H1 (cell line): ENCODE measurements at regions of chr17 and their contacts with region 1.

Region 1: DNA sequence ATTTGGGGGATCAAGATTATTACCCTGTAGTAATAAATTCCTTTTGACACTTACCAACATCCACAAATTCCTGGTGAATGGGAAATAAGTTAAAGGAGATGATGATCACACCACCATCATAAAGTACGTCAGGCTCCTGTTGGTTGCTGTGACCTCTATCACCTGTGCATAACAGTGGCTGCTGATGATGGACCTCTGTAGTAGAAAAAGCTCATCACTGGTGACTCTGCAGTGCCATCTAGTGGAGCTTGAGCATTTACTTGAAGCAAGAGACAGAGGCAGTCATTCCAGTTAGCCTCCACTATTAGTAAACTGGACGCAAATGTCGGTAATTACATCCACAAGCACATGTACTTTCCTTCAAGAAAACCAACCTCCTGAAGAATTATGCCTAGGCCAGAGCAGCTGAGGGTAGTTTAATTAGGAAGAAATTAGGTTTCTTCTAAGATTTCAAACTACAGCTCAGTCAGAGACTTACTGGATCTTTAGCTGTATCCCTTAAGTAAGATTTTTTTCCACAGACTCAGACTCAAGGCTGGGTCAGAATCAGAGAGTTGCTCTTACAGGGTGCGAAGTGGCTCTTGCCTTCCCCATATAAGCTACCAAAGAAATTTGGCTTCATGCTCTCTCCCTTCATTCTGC is 39.3 kb downstream of the CYB561 start:
- DNase-seq: peak; percentile 15 to 67
- H3K4me3 ChIP-seq: no peak overlapping the region
- H3K27ac ChIP-seq: no peak overlapping the region
- H3K4me1 ChIP-seq: no peaks in the 10 kb centered on the region
- H3K27me3 ChIP-seq: no peaks in the 10 kb centered on the region
- CTCF ChIP-seq: peak in 2 of 3 experiments; percentile 85 to 91; a peak in 3 of 4 replicates
- EP300 ChIP-seq: no peak
- POLR2A ChIP-seq: no peak
- RAD21 ChIP-seq: peak; percentile 90 to 93

Region 2: GRCh38 chr17:62995377-62995885 is 411.4 kb before region 1 on chr17:
- CTCF ChIA-PET with region 1: interaction called, 23 read pairs
- POLR2A ChIA-PET with region 1: interaction called, 3 read pairs
- DNase-seq: no peak
- H3K4me3 ChIP-seq: no peak overlapping the region
- H3K27ac ChIP-seq: no peak overlapping the region
- H3K4me1 ChIP-seq: no peaks in the 10 kb centered on the region
- H3K27me3 ChIP-seq: no peaks in the 10 kb centered on the region
- CTCF ChIP-seq: peak; percentile 56 to 81 (median 70)
- EP300 ChIP-seq: no peak
- POLR2A ChIP-seq: no peak
- RAD21 ChIP-seq: peak; percentile 71 to 75

Region 3: GRCh38 chr17:63082273-63082993 is 324.4 kb before region 1 on chr17:
- CTCF ChIA-PET with region 1: interaction called, 33 read pairs
- POLR2A ChIA-PET with region 1: no interaction called
- DNase-seq: no peak
- H3K4me3 ChIP-seq: no peak overlapping the region
- H3K27ac ChIP-seq: no peak overlapping the region
- H3K4me1 ChIP-seq: no peaks in the 10 kb centered on the region
- H3K27me3 ChIP-seq: no peaks in the 10 kb centered on the region
- CTCF ChIP-seq: peak in 2 of 3 experiments; percentile 15; a peak in 2 of 4 replicates
- EP300 ChIP-seq: no peak
- POLR2A ChIP-seq: no peak
- RAD21 ChIP-seq: peak in 1 of 2 experiments; percentile 52; a peak in 3 of 4 replicates

Region 4: DNA sequence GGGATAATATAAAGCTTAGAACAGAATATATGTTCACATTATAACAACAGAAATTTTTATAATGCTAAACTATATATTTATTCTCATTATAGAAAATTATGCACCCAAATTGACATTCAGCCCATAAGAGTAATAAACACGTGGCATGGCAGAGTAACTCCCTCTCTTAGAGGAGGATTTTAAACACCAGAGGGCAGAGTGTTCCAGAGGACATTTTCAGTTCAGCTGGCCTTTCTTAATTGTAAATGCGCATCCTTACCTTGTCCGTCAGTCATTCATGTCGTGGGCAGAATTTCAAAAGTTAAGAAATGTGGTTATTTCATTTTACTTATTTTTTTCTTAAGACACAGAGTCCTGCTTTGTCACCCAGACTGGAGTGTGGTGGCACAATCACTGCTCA is 293.6 kb before region 1 on chr17:
- CTCF ChIA-PET with region 1: interaction called, 18 read pairs
- POLR2A ChIA-PET with region 1: no interaction called
- DNase-seq: no peak
- H3K4me3 ChIP-seq: no peak overlapping the region
- H3K27ac ChIP-seq: no peak overlapping the region
- H3K4me1 ChIP-seq: no peaks in the 10 kb centered on the region
- H3K27me3 ChIP-seq: no peaks in the 10 kb centered on the region
- CTCF ChIP-seq: peak in 2 of 3 experiments; percentile 39 to 44; a peak in 2 of 4 replicates
- EP300 ChIP-seq: no peak
- POLR2A ChIP-seq: no peak
- RAD21 ChIP-seq: peak; percentile 41 to 61

Region 5: GRCh38 chr17:63356337-63356757 is 50.5 kb before region 1 on chr17:
- CTCF ChIA-PET with region 1: no interaction called
- POLR2A ChIA-PET with region 1: no interaction called
- DNase-seq: no peak
- H3K4me3 ChIP-seq: no peak overlapping the region
- H3K27ac ChIP-seq: no peak overlapping the region
- H3K4me1 ChIP-seq: no peaks in the 10 kb centered on the region
- H3K27me3 ChIP-seq: no peaks in the 10 kb centered on the region
- CTCF ChIP-seq: no peak
- EP300 ChIP-seq: no peak
- POLR2A ChIP-seq: no peak
- RAD21 ChIP-seq: no peak

Region 6: GRCh38 chr17:63381101-63381729 is 25.6 kb before region 1 on chr17:
- CTCF ChIA-PET with region 1: interaction called, 15 read pairs
- POLR2A ChIA-PET with region 1: no interaction called
- DNase-seq: no peak
- H3K4me3 ChIP-seq: no peak overlapping the region
- H3K27ac ChIP-seq: no peak overlapping the region
- H3K4me1 ChIP-seq: no peaks in the 10 kb centered on the region
- H3K27me3 ChIP-seq: no peaks in the 10 kb centered on the region
- CTCF ChIP-seq: no peak
- EP300 ChIP-seq: no peak
- POLR2A ChIP-seq: no peak
- RAD21 ChIP-seq: no peak

Region 7: GRCh38 chr17:63395075-63395805 is 11.6 kb before region 1 on chr17:
- CTCF ChIA-PET with region 1: interaction called, 16 read pairs
- POLR2A ChIA-PET with region 1: no interaction called
- DNase-seq: no peak
- H3K4me3 ChIP-seq: no peak overlapping the region
- H3K27ac ChIP-seq: no peak overlapping the region
- H3K4me1 ChIP-seq: peaks cover 0 to 3% (median 1%) of the 10 kb centered on the region in 4 experiments; a peak in 1 of 7 replicates
- H3K27me3 ChIP-seq: peaks cover 0 to 1% (median 0%) of the 10 kb centered on the region in 4 experiments; a peak in 1 of 7 replicates
- CTCF ChIP-seq: no peak
- EP300 ChIP-seq: no peak
- POLR2A ChIP-seq: no peak
- RAD21 ChIP-seq: no peak

Region 8: GRCh38 chr17:63419949-63420867 is 13.4 kb after region 1 on chr17:
- CTCF ChIA-PET with region 1: interaction called, 48 read pairs
- POLR2A ChIA-PET with region 1: no interaction called
- DNase-seq: no peak
- H3K4me3 ChIP-seq: no peak overlapping the region
- H3K27ac ChIP-seq: no peak overlapping the region
- H3K4me1 ChIP-seq: no peaks in the 10 kb centered on the region
- H3K27me3 ChIP-seq: no peaks in the 10 kb centered on the region
- CTCF ChIP-seq: no peak
- EP300 ChIP-seq: no peak
- POLR2A ChIP-seq: no peak
- RAD21 ChIP-seq: no peak